GM13976 (cell line): ENCODE measurements at regions of chr16 and their contacts with region 1.

Region 1: GRCh38 chr16:48623304-48624016 is 13.5 kb upstream of the N4BP1 start:
- DNase-seq: peak; percentile 92
- CTCF ChIP-seq: peak; percentile 99

Region 2: DNA sequence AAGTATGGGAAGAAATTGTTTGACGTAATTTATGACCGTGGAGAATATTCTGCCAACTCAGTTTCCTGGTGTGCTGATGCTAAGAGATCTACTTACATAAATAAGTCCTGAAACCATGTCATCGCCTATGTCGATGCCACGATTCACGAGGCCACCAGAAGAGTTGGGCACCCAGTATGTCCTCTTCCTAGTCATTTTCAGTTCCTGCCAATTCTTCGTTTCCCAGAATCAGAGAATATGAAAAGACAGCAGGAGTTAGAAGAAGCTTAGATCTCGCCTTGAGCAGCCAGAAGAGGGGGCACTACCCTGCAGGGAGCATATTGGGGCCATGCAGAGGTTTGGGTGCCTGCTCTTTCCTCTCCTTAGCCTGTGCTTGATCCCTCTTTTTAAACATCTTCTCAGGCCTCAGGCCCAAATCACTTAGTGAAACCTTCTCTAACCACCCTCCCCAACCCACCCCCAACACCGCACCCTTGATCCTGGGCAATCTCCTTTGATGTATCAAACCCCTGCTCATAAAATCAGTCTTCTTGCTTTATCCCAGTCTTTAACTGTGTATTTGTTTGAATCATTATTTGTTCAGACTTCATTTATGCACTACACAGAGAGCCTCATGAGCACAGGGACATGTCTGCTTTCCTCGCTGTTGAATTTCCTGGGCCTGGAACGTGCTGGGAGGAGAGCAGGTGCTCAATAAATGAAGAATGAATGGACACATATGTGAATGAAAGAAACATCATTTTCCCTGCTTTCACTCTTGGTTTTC is 391.6 kb before region 1 on chr16:
- in situ Hi-C with region 1: loop called (anchors 10 kb)
- DNase-seq: peak; percentile 69
- CTCF ChIP-seq: peak; percentile 65

Region 3: GRCh38 chr16:48452977-48453760 is 170.3 kb before region 1 on chr16:
- in situ Hi-C with region 1: loop called (anchors 25 kb)
- DNase-seq: no peak
- CTCF ChIP-seq: no peak